PC-3 (cell line): ENCODE measurements at regions of chr9 and their contacts with region 1.

Region 1: GRCh38 chr9:92716557-92716956 is 46.6 kb upstream of the IPPK start:
- DNase-seq: peak; percentile 62
- ATAC-seq: peak; percentile 69
- H3K4me3 ChIP-seq: no peak overlapping the region
- H3K27ac ChIP-seq: no peak overlapping the region
- H3K4me1 ChIP-seq: no peaks in the 10 kb centered on the region
- H3K27me3 ChIP-seq: no peaks in the 10 kb centered on the region
- CTCF ChIP-seq: peak; percentile 86

Region 2: GRCh38 chr9:92634712-92635605 is 81.6 kb before region 1 on chr9:
- CTCF ChIA-PET with region 1: no interaction called
- POLR2A ChIA-PET with region 1: no interaction called
- intact Hi-C with region 1: no loop called
- DNase-seq: peak; percentile 66
- ATAC-seq: peak; percentile 83
- H3K4me3 ChIP-seq: no peak overlapping the region
- H3K27ac ChIP-seq: no peak overlapping the region
- H3K4me1 ChIP-seq: no peaks in the 10 kb centered on the region
- H3K27me3 ChIP-seq: no peaks in the 10 kb centered on the region
- CTCF ChIP-seq: peak; percentile 91

Region 3: DNA sequence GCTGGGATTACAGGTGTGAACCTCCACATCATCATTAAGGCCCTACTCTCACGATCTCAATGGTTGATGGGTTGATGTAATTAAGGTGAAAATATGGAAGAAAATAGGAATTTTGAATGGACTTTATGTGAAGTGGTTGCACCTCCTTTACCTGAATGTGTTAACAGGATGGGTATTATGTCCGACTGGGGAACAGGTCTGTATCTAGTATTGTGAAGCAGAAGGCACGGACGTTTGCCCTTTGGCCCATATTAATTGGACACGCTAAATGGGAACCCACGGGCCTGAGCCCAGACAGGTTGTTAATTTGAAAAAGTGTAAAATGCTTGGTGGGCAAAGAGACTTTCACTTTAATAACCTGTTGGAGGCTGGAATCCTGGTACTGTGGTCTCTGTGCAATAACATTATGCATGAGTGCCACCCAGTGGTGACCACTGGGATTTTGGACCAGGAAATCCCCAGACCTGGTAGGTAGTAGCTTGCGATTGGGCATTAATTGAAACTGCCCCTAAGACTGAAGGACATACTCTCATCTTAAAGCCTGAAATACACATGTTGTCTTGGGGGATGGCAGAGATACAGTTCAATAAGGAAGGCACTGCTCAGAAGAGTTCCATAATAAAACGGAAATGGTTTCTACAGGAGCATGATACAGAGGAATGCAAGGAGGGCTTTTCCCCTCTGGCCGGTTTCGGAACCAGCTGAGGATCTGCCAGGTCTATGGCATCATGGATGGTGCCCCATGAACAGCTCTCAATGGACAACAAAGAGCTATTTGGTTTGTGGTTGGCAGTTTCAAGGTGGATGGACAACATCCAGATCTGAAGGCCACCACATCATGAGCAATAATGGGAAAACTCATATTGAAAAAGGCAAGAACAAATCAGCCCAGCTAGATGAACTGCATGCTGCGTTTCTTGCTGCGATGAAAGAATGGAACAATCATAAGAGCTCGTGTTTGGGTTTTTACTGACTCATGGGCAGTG is 74.3 kb after region 1 on chr9:
- CTCF ChIA-PET with region 1: no interaction called
- POLR2A ChIA-PET with region 1: no interaction called
- intact Hi-C with region 1: loop called (anchors 1 kb)
- DNase-seq: peak; percentile 86
- ATAC-seq: peak; percentile 96
- H3K4me3 ChIP-seq: peak overlapping the region; percentile 32
- H3K27ac ChIP-seq: no peak overlapping the region
- H3K4me1 ChIP-seq: no peaks in the 10 kb centered on the region
- H3K27me3 ChIP-seq: no peaks in the 10 kb centered on the region
- CTCF ChIP-seq: peak; percentile 81

Region 4: GRCh38 chr9:92829420-92829819 is 112.9 kb after region 1 on chr9:
- CTCF ChIA-PET with region 1: no interaction called
- POLR2A ChIA-PET with region 1: no interaction called
- intact Hi-C with region 1: no loop called
- DNase-seq: no peak
- ATAC-seq: no peak
- H3K4me3 ChIP-seq: no peak overlapping the region
- H3K27ac ChIP-seq: no peak overlapping the region
- H3K4me1 ChIP-seq: no peaks in the 10 kb centered on the region
- H3K27me3 ChIP-seq: no peaks in the 10 kb centered on the region
- CTCF ChIP-seq: no peak

Region 5: DNA sequence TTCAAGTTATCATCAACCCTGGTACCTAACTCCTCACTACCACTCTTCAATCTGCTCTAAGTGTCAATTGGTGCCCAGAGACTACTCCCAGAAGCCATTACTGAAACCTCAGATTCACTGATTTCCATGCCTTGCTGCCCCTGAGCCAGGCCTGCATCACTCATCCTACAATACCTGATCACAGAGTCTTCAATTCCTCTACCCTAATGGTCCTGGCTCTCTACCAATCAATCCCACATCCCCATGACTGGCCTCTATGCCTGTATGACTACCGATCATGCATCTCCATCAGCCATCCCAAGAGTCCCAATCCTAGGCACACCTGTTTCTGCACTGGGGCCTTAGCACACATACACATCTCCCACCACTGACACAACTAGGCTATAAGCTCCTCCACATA is 158.8 kb after region 1 on chr9:
- CTCF ChIA-PET with region 1: no interaction called
- POLR2A ChIA-PET with region 1: no interaction called
- intact Hi-C with region 1: no loop called
- DNase-seq: no peak
- ATAC-seq: no peak
- H3K4me3 ChIP-seq: no peak overlapping the region
- H3K27ac ChIP-seq: no peak overlapping the region
- H3K4me1 ChIP-seq: peaks cover 12% of the 10 kb centered on the region; the same call in 1 of the 2 replicates
- H3K27me3 ChIP-seq: no peaks in the 10 kb centered on the region
- CTCF ChIP-seq: no peak